ENCODE measurements at regions of chr10 and their contacts with region 1.

Region 1: DNA sequence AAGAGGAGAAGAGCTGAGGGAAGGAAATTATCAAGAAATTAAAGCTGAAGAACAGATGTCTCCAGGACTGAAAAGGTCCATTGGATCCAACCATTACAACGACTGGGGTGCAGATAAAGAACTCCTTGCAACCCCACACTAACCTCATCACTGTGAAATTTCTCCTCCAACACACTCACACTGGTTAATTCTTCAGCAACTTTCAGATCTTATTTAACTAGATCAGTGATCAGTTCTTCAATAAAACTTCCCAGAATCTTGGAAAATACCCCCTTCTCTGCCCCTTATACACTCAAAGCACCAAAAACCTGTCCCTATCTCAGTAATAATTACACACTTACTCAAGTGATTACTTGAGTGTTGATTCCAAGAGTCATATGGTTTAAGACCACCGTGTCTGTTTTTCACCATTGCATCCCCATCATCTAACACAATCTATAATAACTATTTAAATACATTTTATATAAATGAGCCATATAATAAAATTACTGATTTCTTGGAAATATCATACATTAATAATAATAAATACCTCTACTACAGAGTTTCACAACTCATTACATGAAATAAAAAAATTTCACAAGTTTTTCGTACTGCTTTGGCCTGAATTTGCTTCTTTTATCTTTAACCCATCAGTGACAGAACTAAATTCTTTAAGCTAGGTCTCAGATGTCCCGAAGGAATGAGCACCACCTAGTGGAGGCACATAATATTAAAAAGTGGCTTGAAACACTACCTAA is 123.7 kb downstream of the MPP7 start:
- DNase-seq: peak; percentile 57
- H3K4me3 Mint-ChIP-seq: peak overlapping the region; percentile 3
- H3K27ac Mint-ChIP-seq: peak overlapping the region; percentile 23
- H3K4me1 Mint-ChIP-seq: peaks cover 17% of the 10 kb centered on the region
- H3K27me3 Mint-ChIP-seq: no peaks in the 10 kb centered on the region
- CTCF ChIP-seq: peak; percentile 60

Region 2: GRCh38 chr10:27742195-27743011 is 436.8 kb before region 1 on chr10:
- CTCF ChIA-PET with region 1: interaction called, 4 read pairs
- intact Hi-C with region 1: loop called (anchors 5 kb)
- DNase-seq: peak; percentile 89
- H3K4me3 Mint-ChIP-seq: peak overlapping the region; percentile 85
- H3K27ac Mint-ChIP-seq: peak overlapping the region; percentile 54
- H3K4me1 Mint-ChIP-seq: peaks cover 15% of the 10 kb centered on the region
- H3K27me3 Mint-ChIP-seq: peaks cover 43% of the 10 kb centered on the region
- CTCF ChIP-seq: peak; percentile 71

Region 3: DNA sequence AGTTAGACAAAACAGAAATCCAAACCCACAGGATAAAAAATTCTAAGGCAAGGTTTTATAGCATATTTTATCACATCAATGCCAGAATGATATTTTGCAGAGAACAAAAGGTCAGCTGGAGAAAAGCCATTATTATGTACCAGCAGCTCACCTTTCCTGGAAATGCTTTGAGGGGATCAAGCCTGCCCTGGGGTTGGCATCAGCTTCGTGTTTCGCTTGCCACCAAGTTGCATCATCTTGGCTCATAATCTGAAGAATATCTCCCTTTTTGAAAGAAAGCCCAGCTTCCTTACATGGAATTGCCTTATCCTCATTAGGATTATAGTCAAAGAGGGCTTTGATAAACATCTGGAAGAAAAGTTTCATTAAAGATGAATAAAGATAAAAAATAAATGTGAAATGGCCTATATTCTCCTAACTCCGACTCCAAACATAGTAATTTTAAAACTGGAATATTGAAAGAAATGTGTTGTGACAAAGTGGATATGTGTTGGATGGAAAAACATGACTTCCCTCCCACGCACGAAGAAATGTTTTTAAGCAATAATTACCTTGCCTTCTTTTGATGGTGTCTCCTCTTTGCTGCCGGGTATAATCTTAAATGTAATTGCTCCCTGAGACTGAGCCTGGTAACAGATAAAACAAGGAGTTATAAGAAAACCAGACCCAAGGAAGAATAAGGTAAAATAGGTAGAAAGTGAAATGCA is 59.0 kb before region 1 on chr10:
- CTCF ChIA-PET with region 1: no interaction called
- intact Hi-C with region 1: no loop called
- DNase-seq: peak; percentile 27
- H3K4me3 Mint-ChIP-seq: no peak overlapping the region
- H3K27ac Mint-ChIP-seq: peak overlapping the region; percentile 81
- H3K4me1 Mint-ChIP-seq: peaks cover 30% of the 10 kb centered on the region
- H3K27me3 Mint-ChIP-seq: no peaks in the 10 kb centered on the region
- CTCF ChIP-seq: no peak